HEK293 (cell line): ENCODE measurements at regions of chr2 and their contacts with region 1.

Region 1: GRCh38 chr2:222690564-222691200 is 19.2 kb downstream of the MOGAT1 start:
- H3K4me3 ChIP-seq: no peak overlapping the region
- H3K27ac ChIP-seq: no peak overlapping the region
- H3K4me1 ChIP-seq: no peaks in the 10 kb centered on the region
- CTCF ChIP-seq: peak; percentile 82

Region 2: GRCh38 chr2:222677981-222678380 is 12.7 kb before region 1 on chr2:
- CTCF ChIA-PET with region 1: interaction called, 37 read pairs
- POLR2A ChIA-PET with region 1: no interaction called
- H3K4me3 ChIP-seq: no peak overlapping the region
- H3K27ac ChIP-seq: no peak overlapping the region
- H3K4me1 ChIP-seq: no peaks in the 10 kb centered on the region
- CTCF ChIP-seq: no peak

Region 3: DNA sequence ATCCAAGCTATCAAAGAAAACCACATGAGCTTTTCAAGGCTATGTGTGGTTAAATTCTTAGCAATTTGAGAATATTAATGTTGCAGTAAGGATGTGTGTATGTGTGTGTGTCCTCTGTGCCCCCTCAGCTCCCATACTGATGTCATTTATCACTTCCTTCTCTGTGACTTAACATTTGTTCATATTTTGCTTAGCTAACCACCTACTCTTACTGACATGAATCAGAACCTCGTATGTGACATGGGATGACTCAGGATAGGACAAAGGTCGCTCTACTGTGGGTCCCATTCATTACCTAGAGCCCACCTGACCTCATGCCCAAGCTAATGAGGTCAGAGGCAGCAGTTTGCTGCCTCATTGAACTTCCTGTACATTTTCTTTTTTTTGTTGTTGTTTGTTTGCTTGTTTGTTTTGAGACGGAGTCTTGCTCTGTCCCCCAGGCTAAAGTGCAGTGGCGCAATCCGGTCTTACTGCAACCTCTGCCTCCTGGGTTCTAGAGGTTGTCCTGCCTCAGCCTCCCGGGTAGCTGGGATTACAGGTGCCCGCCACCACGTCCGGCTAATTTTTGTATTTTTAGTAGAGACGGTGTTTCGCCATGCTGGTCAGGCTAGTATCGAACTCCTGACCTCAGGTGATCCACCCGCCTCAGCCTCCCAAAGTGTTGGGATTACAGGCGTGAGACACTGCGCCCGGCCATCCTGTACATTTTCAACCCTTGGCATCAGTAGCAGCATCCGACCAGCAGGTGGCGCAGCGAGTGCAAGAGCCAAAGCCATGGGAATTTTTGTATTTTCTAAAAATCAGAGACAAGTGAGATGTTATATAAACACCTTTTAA is 17.2 kb after region 1 on chr2:
- CTCF ChIA-PET with region 1: interaction called, 37 read pairs
- POLR2A ChIA-PET with region 1: no interaction called
- H3K4me3 ChIP-seq: no peak overlapping the region
- H3K27ac ChIP-seq: no peak overlapping the region
- H3K4me1 ChIP-seq: no peaks in the 10 kb centered on the region
- CTCF ChIP-seq: peak; percentile 79

Region 4: GRCh38 chr2:222915092-222915957 is 224.6 kb after region 1 on chr2:
- CTCF ChIA-PET with region 1: interaction called, 13 read pairs
- POLR2A ChIA-PET with region 1: no interaction called
- H3K4me3 ChIP-seq: no peak overlapping the region
- H3K27ac ChIP-seq: no peak overlapping the region
- H3K4me1 ChIP-seq: peaks cover 3% of the 10 kb centered on the region; the same call in 1 of the 2 replicates
- CTCF ChIP-seq: no peak

Region 5: DNA sequence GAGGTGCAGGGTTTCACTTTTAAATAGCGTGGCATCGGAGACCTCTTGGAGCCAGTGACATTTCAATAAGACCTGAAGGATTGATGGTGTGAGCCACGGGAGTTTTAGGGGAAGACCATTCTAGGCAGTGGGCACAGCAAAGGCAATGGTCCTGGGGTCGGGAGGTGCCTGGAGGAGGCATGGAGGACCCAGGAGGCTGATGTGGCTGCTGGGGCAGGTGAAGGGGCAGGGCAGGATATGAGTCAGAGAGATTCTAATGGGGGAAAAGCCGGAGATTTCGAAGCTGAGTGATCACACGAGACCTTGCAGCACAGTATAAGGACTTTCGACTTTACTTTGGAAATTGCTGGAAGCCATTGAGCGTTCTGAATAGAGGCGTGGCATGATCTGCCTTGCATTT is 281.7 kb after region 1 on chr2:
- CTCF ChIA-PET with region 1: interaction called, 10 read pairs
- POLR2A ChIA-PET with region 1: no interaction called
- H3K4me3 ChIP-seq: no peak overlapping the region
- H3K27ac ChIP-seq: no peak overlapping the region
- H3K4me1 ChIP-seq: no peaks in the 10 kb centered on the region
- CTCF ChIP-seq: no peak

Region 6: DNA sequence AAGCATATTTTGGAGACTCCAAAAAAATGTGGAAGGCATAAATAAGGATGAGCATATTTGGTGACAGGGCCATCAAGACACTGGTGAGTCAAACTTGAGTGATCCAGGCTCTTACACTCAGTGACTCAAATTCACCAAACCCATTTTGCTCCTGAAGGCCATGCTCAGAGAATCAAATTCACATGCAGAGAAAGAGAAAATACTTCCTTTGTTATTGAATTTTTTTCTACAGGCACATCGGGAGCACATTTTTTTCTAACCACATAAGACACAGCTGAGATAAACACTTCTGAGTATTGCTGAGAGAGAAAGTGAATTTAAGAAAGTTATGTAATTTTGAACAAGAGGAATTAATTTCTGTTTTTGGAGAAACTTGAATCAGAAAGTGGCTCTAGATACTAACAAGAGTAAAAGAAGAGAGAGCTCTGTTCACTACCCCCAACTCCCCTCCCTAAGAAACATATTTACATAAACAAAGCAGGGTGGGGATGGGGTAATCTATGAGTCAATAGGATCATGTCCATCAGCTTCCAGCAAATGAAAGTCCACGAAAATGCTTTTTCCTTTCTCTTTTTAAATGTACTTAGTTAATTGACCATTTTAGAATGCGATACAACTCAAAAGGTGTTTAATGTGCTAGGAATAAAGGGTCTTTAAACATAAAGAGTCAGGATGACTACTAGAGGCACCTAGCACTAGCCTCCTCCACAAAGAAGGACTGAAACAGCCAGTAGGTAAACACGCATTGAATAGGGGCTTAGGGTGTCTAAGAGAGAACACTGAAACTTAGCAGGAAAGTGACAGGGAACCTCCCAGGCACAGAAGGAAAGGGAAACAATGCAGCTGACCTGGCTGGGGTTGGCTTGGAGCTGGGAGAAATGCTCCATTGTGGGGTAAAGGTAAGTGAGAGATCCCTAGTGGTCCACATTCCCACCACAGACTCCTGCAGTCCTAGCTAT is 513.6 kb after region 1 on chr2:
- CTCF ChIA-PET with region 1: no interaction called
- POLR2A ChIA-PET with region 1: no interaction called
- H3K4me3 ChIP-seq: no peak overlapping the region
- H3K27ac ChIP-seq: no peak overlapping the region
- H3K4me1 ChIP-seq: no peaks in the 10 kb centered on the region
- CTCF ChIP-seq: no peak